ENCODE measurements at regions of chr9 and their contacts with region 1.

Region 1: GRCh38 chr9:98796364-98797101 is at the start of gene ANKS6:
- ATAC-seq: peak; percentile 85 to 94 (median 92)
- H3K4me3 ChIP-seq: peak within 1 kb of the TSS; percentile 44 to 68 (median 61)
- H3K27ac ChIP-seq: no peak within 1 kb of the TSS
- H3K4me1 ChIP-seq: peaks cover 6 to 14% of the 10 kb centered on the region in 2 donors
- total RNA-seq, gene ANKS6: 2.8 to 28.4 (median 6.8) TPM

Region 2: DNA sequence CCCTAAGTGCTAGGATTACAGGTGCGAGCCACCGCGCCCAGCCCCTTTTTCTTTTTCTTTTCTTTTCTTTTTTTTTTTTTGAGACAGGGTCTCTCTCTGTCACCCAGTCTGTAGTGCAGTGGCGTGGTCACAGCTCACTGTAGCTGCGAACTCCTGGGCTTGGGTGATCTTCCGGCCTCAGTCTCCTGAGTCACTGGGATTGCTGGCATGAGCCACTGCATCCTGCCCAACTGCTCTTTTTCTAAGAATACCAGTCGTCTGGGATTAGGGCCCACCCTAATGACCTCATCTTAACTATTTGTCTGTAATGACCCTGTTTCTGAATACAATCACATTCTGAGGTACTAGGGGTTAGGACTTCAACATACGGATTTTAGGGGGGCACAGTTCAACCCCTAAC is 774.1 kb before region 1 on chr9:
- in situ Hi-C with region 1: no loop called
- ATAC-seq: no peak
- H3K4me3 ChIP-seq: no peak overlapping the region
- H3K27ac ChIP-seq: no peak overlapping the region
- H3K4me1 ChIP-seq: no peaks in the 10 kb centered on the region

Region 3: DNA sequence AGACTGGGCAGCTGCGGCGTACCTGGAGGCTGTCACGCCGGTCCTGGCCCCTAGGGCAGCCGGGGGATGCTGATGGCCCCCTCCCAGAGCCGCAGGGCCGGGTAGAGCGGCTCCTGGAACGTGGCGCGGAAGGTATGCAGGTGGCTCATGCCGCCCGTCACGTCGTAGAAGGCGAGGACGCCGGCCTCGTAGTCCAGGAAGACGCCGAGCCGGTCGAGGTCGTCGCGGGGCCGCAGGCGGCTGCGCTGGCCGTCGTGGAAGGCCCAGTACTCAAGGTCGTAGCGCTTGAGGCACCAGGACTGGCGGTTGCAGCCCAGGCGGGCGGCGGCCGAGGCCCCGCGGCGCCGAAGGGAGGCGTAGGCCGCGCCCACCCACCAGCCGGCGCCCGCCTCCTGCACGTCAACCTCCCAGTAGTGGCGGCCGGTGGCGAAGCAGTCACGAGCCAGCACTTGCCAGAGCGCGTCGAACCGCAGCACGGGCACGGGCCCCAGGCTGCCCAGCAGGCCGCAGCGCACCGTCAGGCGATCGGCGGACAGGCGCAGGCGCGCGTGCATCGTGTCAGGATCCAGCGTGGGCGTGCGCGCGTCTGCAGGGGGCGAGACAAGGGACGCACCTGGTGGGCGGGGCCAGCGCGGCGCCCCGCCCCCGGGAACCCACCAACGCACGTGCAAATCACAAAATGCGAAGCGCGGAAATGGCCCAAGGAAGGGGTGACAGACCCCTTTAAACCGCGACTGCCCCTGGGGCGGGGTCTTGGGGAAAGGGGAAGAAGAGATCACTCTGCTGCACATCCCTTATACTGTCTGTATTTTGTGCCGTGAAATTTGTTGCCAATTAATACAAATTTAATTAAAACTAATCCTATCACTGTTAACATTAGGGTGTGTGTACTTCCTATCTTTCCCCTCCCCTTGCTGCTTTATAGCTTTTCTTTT is 708.8 kb before region 1 on chr9:
- in situ Hi-C with region 1: loop called in 1 of 9 experiments (anchors 25 kb)
- ATAC-seq: peak in 5 of 8 experiments; percentile 7 to 63 (median 53)
- H3K4me3 ChIP-seq: no peak overlapping the region
- H3K27ac ChIP-seq: no peak overlapping the region
- H3K4me1 ChIP-seq: peaks cover 7 to 10% of the 10 kb centered on the region in 2 donors

Measured in motor neuron (in vitro differentiated cells).